Heart left ventricle (tissue), 16 donors: ENCODE measurements at regions of chr13 and their contacts with region 1.

Region 1: DNA sequence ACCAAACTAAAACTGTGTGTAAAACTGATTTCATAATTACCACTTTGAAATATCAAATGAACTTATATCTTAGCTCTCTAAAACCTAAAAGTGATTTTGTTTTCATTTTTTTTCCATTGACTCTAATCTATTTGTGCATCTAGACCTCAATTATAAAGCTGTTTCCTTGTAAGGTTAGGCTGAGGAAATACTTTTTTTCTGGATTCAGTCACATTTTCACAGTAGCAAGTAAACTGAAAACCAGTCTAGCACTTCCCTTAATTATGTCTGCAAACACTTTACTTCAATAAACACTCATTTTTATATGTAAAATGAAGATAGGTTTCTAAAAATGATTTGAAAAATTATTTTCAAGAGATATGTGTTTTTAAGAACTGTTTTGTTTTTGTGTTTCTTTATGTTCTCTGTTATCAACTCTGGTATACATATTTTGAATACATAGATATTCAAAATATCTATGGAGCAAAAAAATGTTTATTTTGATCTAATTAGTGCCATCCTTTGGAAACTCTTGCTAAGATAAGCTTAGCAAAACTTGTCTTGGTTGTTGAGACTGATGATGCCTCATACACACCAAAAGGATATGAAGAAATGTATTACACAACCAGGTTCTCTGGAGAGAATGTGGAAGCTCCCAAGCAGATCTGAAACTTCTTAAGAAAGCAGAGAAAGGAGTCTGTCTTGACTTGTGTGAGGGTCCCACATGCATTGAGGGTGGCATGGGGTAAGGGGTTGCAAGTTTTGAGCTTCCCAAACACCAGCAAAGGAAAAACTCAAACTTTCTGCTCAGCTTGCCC is 1887.4 kb downstream of the PCDH9 start:
- DNase-seq: no peak
- ATAC-seq: no peak
- H3K4me3 ChIP-seq: no peak overlapping the region
- H3K27ac ChIP-seq: no peak overlapping the region
- H3K4me1 ChIP-seq: no peaks in the 10 kb centered on the region
- H3K27me3 ChIP-seq: no peaks in the 10 kb centered on the region
- CTCF ChIP-seq: no peak
- POLR2A ChIP-seq: no peak

Region 2: GRCh38 chr13:65300220-65300619 is 42.5 kb before region 1 on chr13:
- intact Hi-C with region 1: loop called in 1 of 10 experiments (anchors 5 kb)
- DNase-seq: no peak
- ATAC-seq: no peak
- H3K4me3 ChIP-seq: no peak overlapping the region
- H3K27ac ChIP-seq: no peak overlapping the region
- H3K4me1 ChIP-seq: no peaks in the 10 kb centered on the region
- H3K27me3 ChIP-seq: no peaks in the 10 kb centered on the region
- CTCF ChIP-seq: no peak
- POLR2A ChIP-seq: no peak

Region 3: DNA sequence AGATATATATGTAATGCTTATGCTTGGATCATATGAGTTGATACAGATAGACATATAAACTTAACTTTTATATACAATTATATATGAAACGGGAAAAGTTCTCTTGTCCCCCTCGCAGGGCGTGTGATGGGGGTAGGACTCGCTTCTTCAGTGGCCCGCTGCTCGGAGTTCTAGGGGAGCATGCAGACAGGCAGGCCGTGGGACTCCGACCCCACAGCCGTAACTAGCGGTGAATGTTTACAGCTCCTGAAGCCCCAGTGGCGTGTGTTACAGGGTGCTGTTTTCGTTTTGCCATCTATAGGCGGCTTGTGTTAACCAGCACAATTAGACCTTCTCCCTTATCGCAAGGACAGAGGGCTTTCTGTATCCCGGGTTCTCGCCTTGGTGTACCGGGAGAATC is 12.5 kb before region 1 on chr13:
- intact Hi-C with region 1: no loop called
- DNase-seq: no peak
- ATAC-seq: no peak
- H3K4me3 ChIP-seq: no peak overlapping the region
- H3K27ac ChIP-seq: no peak overlapping the region
- H3K4me1 ChIP-seq: no peaks in the 10 kb centered on the region
- H3K27me3 ChIP-seq: no peaks in the 10 kb centered on the region
- CTCF ChIP-seq: no peak
- POLR2A ChIP-seq: no peak